ENCODE measurements at regions of chr15 and their contacts with region 1.

Region 1: GRCh38 chr15:84588053-84588874 is 12.5 kb upstream of the ZSCAN2 start:
- ATAC-seq: peak; percentile 98 to 99 (median 99)
- H3K4me3 ChIP-seq: peak overlapping the region in 4 of 5 donors; percentile 5 to 20 (median 12)
- H3K27ac ChIP-seq: no peak overlapping the region
- H3K4me1 ChIP-seq: peaks cover 11 to 13% of the 10 kb centered on the region in 2 donors

Region 2: GRCh38 chr15:84797212-84797611 is 208.9 kb after region 1 on chr15:
- in situ Hi-C with region 1: no loop called
- ATAC-seq: no peak
- H3K4me3 ChIP-seq: no peak overlapping the region
- H3K27ac ChIP-seq: no peak overlapping the region
- H3K4me1 ChIP-seq: no peaks in the 10 kb centered on the region

Region 3: GRCh38 chr15:84929744-84930371 is 341.6 kb after region 1 on chr15:
- in situ Hi-C with region 1: loop called in 2 of 9 experiments (anchors 25 kb)
- ATAC-seq: peak in 6 of 8 experiments; percentile 43 to 87 (median 78)
- H3K4me3 ChIP-seq: no peak overlapping the region
- H3K27ac ChIP-seq: no peak overlapping the region
- H3K4me1 ChIP-seq: peaks cover 0 to 3% of the 10 kb centered on the region in 2 donors

Measured in motor neuron (in vitro differentiated cells).